ENCODE measurements at regions of chr12 and their contacts with region 1.

Region 1: DNA sequence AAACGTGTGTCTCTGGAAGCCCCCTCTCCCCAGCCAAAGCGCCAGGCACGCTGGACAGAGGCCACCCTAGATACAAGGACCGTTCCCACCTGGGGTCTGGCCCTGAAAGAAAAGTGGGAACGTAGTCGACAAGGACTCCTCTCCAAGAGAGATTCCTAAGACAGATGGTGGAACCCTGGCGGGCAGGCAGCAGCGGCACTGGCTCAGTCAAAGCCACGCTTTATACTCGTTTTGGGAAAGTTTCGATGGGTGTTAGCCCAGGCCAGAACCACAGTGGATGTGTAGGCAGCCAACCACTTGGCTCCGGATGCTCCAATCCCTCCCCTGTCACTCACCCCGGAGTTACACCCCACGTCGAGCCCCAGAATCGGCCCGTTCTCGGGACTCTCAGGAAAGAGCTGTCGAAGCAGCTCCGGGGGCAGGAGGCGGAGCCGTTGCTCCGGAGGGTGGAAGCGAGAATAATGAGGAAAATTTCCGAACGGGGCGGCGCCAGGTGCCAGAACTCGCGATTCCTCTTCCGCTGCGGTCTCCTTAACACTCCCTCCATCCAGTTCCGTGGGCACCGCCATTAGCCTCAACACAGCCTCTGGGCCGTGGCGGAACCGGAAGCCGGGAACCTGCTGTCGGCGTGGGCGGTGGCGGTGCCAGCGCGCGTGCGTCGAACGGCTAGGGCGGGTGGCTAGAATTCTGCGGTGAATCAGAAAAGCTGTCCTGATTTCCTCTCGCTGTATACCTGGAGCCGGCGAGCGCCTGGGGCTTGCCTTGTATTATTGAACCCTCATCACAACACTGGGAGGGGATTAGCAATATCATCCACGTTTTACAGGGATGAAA is at the start of gene BCDIN3D:
- DNase-seq: peak; percentile 66
- ATAC-seq: peak; percentile 97
- H3K4me3 ChIP-seq: peak within 1 kb of the TSS; percentile 98
- H3K27ac ChIP-seq: peak within 1 kb of the TSS; percentile 76
- H3K4me1 ChIP-seq: peaks cover 10% of the 10 kb centered on the region; the same call in 1 of the 2 replicates
- H3K27me3 ChIP-seq: no peaks in the 10 kb centered on the region
- CTCF ChIP-seq: no peak
- EP300 ChIP-seq: no peak
- POLR2A ChIP-seq: peak; percentile 94
- RAD21 ChIP-seq: no peak
- polyA plus RNA-seq, gene BCDIN3D: 5.5 to 6.3 TPM

Region 2: DNA sequence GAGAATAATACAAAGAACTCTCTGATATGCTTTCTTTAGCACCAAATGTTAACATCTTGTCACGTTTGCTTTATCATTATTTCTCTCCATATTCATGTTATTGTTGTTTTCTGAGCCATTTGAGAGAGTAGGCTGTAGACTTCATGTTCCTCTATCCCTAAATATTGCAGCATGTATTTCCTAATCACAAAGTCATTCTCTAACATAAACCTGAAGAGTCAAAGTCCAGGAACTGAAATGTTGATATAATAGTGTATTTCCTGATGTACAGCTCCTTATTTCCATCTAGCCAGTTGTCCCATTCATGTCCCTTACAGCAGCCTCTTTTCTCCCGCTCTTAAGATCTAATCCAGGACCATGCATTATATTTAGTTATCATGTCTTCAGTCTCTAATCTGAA is 402.7 kb before region 1 on chr12:
- CTCF ChIA-PET with region 1: no interaction called
- POLR2A ChIA-PET with region 1: no interaction called
- RAD21 ChIA-PET with region 1: no interaction called
- SMC1A ChIA-PET with region 1: no interaction called
- in situ Hi-C with region 1: no loop called
- intact Hi-C with region 1: no loop called
- DNase-seq: no peak
- ATAC-seq: no peak
- H3K4me3 ChIP-seq: no peak overlapping the region
- H3K27ac ChIP-seq: no peak overlapping the region
- H3K4me1 ChIP-seq: no peaks in the 10 kb centered on the region
- H3K27me3 ChIP-seq: no peaks in the 10 kb centered on the region
- CTCF ChIP-seq: no peak
- EP300 ChIP-seq: no peak
- POLR2A ChIP-seq: no peak
- RAD21 ChIP-seq: no peak

Region 3: GRCh38 chr12:49636979-49637755 is 205.6 kb before region 1 on chr12:
- CTCF ChIA-PET with region 1: interaction called, 28 read pairs
- POLR2A ChIA-PET with region 1: no interaction called
- RAD21 ChIA-PET with region 1: interaction called, 3 read pairs
- SMC1A ChIA-PET with region 1: interaction called, 3 read pairs
- in situ Hi-C with region 1: loop called (anchors 10 kb)
- intact Hi-C with region 1: loop called (anchors 10 kb)
- DNase-seq: no peak
- ATAC-seq: peak; percentile 93
- H3K4me3 ChIP-seq: no peak overlapping the region
- H3K27ac ChIP-seq: no peak overlapping the region
- H3K4me1 ChIP-seq: peaks cover 3% of the 10 kb centered on the region; the same call in 1 of the 2 replicates
- H3K27me3 ChIP-seq: no peaks in the 10 kb centered on the region
- CTCF ChIP-seq: peak; percentile 73 to 77 (median 74)
- EP300 ChIP-seq: no peak
- POLR2A ChIP-seq: no peak; the same call in 1 of the 2 replicates
- RAD21 ChIP-seq: peak; percentile 84

Region 4: DNA sequence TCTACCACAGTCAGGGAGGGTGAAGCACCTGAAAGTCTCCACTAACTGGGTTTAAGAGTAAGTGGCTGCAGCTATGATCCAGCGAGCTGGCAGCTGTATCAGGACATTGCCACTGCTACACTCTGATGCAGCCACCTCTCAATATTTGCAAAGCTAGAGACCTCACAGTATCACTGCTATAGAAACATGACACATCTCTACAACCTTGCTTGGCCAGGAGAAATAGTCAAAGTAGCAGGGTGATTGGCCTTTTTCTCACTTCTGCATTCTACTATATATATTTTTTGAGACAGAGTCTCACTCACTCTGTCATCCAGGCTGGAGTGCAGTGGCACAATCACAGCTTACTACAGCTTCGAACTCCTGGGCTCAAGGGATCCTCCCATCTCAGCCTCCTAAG is 126.2 kb before region 1 on chr12:
- CTCF ChIA-PET with region 1: interaction called, 12 read pairs
- POLR2A ChIA-PET with region 1: no interaction called
- RAD21 ChIA-PET with region 1: no interaction called
- SMC1A ChIA-PET with region 1: interaction called, 3 read pairs
- in situ Hi-C with region 1: no loop called
- intact Hi-C with region 1: no loop called
- DNase-seq: no peak
- ATAC-seq: peak; percentile 95
- H3K4me3 ChIP-seq: no peak overlapping the region
- H3K27ac ChIP-seq: no peak overlapping the region
- H3K4me1 ChIP-seq: peaks cover 9% of the 10 kb centered on the region
- H3K27me3 ChIP-seq: peaks cover 0 to 2% of the 10 kb centered on the region in 2 experiments; a peak in 1 of 4 replicates
- CTCF ChIP-seq: no peak
- EP300 ChIP-seq: no peak
- POLR2A ChIP-seq: no peak
- RAD21 ChIP-seq: no peak

Region 5: GRCh38 chr12:49750027-49750995 is 92.4 kb before region 1 on chr12:
- CTCF ChIA-PET with region 1: interaction called, 18 read pairs
- POLR2A ChIA-PET with region 1: interaction called, 5 read pairs
- RAD21 ChIA-PET with region 1: interaction called, 4 read pairs
- SMC1A ChIA-PET with region 1: interaction called, 8 read pairs
- in situ Hi-C with region 1: no loop called
- intact Hi-C with region 1: no loop called
- DNase-seq: peak; percentile 36
- ATAC-seq: peak; percentile 81
- H3K4me3 ChIP-seq: peak overlapping the region; percentile 48
- H3K27ac ChIP-seq: peak overlapping the region; percentile 27
- H3K4me1 ChIP-seq: peaks cover 46% of the 10 kb centered on the region
- H3K27me3 ChIP-seq: no peaks in the 10 kb centered on the region
- CTCF ChIP-seq: peak in 2 of 3 experiments; percentile 6 to 29; a peak in 2 of 6 replicates
- EP300 ChIP-seq: peak in 1 of 2 experiments; percentile 31; a peak in 2 of 4 replicates
- POLR2A ChIP-seq: no peak
- RAD21 ChIP-seq: peak; percentile 30; the same call in 1 of the 2 replicates

Region 6: DNA sequence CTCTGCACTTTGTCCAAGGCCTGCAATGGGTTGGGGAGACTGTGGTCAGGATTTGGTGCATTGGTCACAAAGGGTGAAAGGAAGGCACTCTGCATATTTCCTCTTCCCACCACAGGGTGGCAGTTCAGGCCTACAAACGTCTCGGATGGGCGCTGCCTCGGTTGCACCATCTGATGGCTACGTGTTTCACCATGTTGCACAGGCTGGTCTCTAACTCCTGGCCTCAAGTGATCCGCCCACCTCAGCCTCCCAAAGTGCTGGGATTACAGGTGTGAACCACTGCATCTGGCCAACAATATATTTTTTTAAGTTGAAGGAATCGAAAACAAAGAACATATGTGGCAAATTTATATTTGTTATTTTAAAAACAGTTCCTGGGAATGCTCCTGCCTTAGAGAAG is 66.3 kb before region 1 on chr12:
- CTCF ChIA-PET with region 1: interaction called, 122 read pairs
- POLR2A ChIA-PET with region 1: no interaction called
- RAD21 ChIA-PET with region 1: interaction called, 49 read pairs
- SMC1A ChIA-PET with region 1: interaction called, 56 read pairs
- in situ Hi-C with region 1: loop called (anchors 5 kb)
- intact Hi-C with region 1: loop called (anchors 1 kb)
- DNase-seq: no peak
- ATAC-seq: peak; percentile 95
- H3K4me3 ChIP-seq: no peak overlapping the region
- H3K27ac ChIP-seq: no peak overlapping the region
- H3K4me1 ChIP-seq: peaks cover 6% of the 10 kb centered on the region
- H3K27me3 ChIP-seq: no peaks in the 10 kb centered on the region
- CTCF ChIP-seq: peak; percentile 79 to 80 (median 79)
- EP300 ChIP-seq: no peak
- POLR2A ChIP-seq: no peak
- RAD21 ChIP-seq: peak; percentile 90

Region 7: GRCh38 chr12:49828133-49829091 is 14.3 kb before region 1 on chr12 and contains the start of gene NCKAP5L:
- CTCF ChIA-PET with region 1: interaction called, 61 read pairs
- POLR2A ChIA-PET with region 1: interaction called, 6 read pairs
- RAD21 ChIA-PET with region 1: interaction called, 13 read pairs
- SMC1A ChIA-PET with region 1: interaction called, 32 read pairs
- in situ Hi-C with region 1: no loop called
- intact Hi-C with region 1: no loop called
- DNase-seq: no peak
- ATAC-seq: peak; percentile 97
- H3K4me3 ChIP-seq: peak within 1 kb of the TSS; percentile 99
- H3K27ac ChIP-seq: peak within 1 kb of the TSS; percentile 58
- H3K4me1 ChIP-seq: peaks cover 26% of the 10 kb centered on the region
- H3K27me3 ChIP-seq: no peaks in the 10 kb centered on the region
- CTCF ChIP-seq: no peak
- EP300 ChIP-seq: 0 out of 4 replicates have a peak, but pooled peaks of 1 of the 2 experiments have one; percentile 21
- POLR2A ChIP-seq: peak; percentile 85
- RAD21 ChIP-seq: no peak
- polyA plus RNA-seq, gene NCKAP5L: 0.03 to 0.16 TPM

Region 8: DNA sequence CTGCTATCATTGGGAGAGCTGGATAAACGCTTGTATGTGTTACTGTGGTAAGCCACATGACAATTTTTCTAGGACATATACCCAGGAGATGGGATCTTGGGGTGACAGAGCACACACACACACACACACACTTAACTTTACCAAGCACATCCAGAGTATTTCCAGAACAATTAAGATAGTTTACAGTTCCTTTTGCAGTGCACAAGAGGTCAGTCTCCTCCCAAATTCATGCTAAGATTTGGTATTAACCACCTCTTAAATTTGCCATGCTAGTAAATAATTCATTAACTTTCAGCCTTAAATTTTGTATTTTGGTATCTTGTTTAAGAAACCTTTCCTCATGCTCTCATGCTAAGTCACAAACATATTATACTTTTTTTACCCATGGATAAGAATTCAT is 474.5 kb after region 1 on chr12:
- CTCF ChIA-PET with region 1: no interaction called
- POLR2A ChIA-PET with region 1: no interaction called
- RAD21 ChIA-PET with region 1: no interaction called
- SMC1A ChIA-PET with region 1: no interaction called
- in situ Hi-C with region 1: no loop called
- intact Hi-C with region 1: no loop called
- DNase-seq: no peak
- ATAC-seq: no peak
- H3K4me3 ChIP-seq: no peak overlapping the region
- H3K27ac ChIP-seq: no peak overlapping the region
- H3K4me1 ChIP-seq: no peaks in the 10 kb centered on the region
- H3K27me3 ChIP-seq: no peaks in the 10 kb centered on the region
- CTCF ChIP-seq: no peak
- EP300 ChIP-seq: no peak
- POLR2A ChIP-seq: no peak
- RAD21 ChIP-seq: peak; percentile 9; the same call in 1 of the 2 replicates